Ascending aorta (tissue), 2 donors: ENCODE measurements at regions of chr19 and their contacts with region 1.

Region 1: DNA sequence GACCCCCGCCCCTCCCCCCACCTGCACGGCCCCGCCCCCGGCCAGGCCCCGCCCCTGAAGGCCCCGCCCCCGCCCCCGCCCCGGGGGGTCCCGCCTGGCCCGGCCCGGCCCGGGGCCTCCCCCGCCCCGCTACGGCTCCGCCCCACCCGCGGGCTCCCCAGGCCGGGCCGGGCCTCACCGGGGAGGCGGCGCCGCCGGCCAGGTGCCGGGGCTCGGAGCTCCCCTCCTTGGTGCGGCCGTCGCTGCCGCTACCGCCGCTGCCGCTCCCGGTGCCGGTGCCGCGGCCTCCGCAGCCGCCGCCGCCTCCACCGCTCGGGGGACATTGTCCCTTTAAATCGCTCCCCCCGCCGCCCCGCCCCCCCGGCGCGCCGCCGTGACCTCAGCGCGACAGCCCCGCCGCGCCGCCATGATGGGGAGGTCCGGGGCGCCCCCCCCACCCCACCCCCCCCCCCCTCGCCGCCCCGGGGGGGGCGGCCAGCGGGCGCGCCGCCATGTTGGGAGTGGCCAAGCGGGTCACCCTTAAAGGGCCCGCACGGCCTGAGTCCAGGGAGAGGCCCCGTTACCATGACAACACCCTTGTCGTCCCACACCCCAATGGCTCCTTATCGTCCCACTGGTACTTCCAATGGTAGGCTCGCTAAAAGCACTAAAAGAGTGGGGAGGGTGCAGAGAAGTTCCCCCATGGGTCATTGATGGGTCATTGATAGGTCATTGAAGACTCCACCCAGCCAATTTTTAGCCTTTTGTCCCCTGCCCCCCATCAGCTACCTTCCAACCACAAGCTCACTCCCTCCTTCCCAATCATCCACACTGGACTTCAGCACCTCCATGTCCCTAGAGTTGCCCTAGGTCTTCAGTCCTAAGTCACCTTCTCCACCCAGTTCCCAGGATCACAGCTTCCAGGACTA is at the start of gene WIZ:
- DNase-seq: peak; percentile 43 to 94
- H3K4me3 ChIP-seq: peak within 1 kb of the TSS; percentile 53 to 89
- H3K27ac ChIP-seq: peak within 1 kb of the TSS; percentile 64 to 86
- H3K4me1 ChIP-seq: peaks cover 17 to 36% of the 10 kb centered on the region in 2 donors
- H3K27me3 ChIP-seq: no peaks in the 10 kb centered on the region
- CTCF ChIP-seq: no peak
- total RNA-seq, gene WIZ: 90.4 TPM

Region 2: DNA sequence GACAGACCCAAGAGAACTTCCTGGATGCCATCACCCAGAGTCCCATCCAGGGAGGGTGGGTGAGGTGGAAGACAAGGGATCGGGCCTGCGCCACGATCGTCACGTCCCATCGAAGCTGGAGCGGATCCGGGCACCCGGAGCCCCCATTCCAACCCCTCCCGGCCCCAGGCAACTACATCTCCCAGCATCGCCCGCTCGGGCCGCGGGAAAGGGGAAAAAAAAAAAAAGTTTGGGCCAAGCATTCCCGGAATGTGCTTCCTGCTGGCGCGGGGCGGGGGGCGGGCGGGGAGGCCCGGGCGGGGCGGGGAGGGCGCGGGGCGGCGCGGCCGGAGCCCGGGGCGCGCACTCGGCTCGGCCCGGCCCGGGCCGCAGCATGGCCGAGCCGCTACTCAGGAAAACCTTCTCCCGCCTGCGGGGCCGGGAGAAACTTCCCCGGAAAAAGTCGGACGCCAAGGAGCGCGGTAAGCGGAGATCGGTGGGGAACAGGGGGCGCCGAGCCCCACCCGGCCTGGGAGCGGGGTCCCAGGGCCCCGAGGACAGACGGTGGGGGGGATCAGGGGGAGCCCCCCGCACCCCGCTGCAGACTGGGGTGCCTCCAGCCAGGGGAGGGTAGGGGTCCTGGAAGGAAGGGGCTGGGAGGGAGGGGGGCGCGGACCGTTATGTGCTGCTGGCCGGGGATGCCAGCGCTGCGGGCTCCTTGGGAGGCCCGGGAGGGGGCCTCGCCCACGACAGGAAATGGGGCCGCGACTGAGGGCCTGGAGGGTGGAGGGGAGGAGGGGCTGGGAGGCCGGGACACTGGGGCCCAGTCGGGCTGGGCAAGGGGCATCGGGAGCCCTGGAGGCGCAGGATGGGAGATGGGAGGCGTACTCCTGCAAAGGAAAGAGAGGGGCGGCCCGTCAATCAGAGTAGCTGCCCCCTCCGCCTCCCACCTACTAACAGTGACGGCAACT is 342.5 kb before region 1 on chr19 and contains the start of gene SYDE1:
- intact Hi-C with region 1: loop called (anchors 5 kb)
- DNase-seq: peak in 1 of 2 donors; percentile 78
- H3K4me3 ChIP-seq: peak within 1 kb of the TSS; percentile 84 to 95
- H3K27ac ChIP-seq: peak within 1 kb of the TSS; percentile 92 to 97
- H3K4me1 ChIP-seq: peaks cover 4 to 10% of the 10 kb centered on the region in 2 donors
- H3K27me3 ChIP-seq: no peaks in the 10 kb centered on the region
- CTCF ChIP-seq: no peak
- total RNA-seq, gene SYDE1: 104 TPM

Region 3: DNA sequence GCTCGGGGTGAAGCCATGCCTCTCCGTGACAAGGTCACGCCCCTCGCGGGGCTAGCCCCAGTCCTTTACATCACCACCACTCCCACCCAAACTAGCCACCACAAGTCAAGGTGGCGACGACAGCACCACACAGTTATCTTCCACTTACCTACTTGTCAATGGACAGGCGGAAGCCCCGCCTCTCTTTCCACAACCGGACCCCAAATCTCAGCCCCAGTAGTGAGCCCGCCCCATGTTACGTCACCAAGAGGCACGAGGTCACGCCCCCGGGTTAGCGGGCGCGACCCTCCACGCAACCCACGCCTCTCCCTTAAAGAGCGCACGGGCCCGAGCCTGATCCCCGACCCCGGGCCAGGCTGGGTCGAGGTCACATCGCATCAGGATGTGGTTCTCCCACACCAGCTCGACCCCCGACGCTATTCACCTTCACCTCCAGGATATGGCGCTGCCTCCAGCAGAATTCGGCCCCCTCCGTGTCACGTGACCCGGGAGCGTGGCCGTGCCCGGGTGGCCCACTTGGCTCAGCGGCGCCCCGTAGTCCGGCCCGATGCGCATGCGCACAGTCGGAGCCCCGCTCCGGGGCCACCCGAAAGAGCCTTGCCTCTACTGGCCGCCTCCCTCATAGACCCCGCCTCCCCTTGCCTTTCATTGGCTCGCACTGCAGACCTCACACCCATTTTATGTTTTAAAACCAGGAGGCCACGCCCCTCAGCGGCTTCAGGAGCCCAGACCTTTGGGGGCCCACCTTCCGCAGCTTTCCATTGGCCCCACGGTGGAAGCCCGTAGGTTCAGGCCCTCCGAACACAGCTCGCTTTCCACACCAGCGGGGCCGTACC is 324.4 kb before region 1 on chr19:
- intact Hi-C with region 1: loop called (anchors 5 kb)
- DNase-seq: peak; percentile 95 to 99
- H3K4me3 ChIP-seq: peak overlapping the region; percentile 60 to 84
- H3K27ac ChIP-seq: peak overlapping the region; percentile 81 to 89
- H3K4me1 ChIP-seq: peaks cover 3 to 12% of the 10 kb centered on the region in 2 donors
- H3K27me3 ChIP-seq: no peaks in the 10 kb centered on the region
- CTCF ChIP-seq: no peak

Region 4: DNA sequence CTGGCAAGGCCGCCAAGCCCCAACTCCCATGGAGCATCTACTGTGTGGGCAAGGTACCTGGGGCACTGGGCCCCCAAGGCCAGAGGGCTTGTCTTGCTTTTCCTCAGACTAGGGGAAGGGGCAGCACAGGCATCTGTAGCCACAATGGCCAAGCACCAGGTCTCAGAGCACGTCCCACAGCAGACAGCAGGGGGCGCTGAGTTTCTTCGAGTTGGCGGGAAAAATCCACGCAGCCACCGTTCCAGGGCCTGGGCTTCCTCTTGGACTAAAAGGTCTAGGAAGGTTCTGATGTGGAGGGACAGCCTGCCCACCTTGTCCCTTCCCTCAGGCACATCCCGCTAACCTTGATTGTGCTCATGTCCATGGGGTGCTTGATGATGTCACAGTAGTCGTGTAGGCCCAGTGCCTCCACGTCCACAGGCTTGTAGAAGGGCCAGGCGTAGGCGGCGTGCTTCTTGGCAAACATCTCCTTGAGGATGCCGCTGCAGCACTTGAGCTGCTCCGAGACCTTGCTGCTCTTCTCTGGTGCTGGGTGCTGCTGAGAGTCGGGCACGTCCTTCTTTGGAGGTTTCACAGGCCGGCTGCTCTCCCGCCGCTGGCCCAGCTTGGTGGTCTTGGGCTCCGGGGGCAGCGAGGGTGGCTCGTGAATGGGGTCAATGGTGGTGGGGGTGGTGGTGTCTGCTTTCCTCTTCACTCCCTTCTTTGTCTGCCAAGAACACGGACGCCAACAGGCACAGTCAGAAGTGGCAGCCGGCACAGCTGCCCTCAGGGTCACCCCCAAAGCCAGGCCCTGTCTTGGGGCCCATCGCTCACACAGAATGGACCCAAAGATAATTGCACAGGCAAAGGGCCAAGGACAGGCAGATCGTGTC is 185.6 kb before region 1 on chr19:
- intact Hi-C with region 1: loop called (anchors 5 kb)
- DNase-seq: peak in 1 of 2 donors; percentile 89
- H3K4me3 ChIP-seq: no peak overlapping the region
- H3K27ac ChIP-seq: peak overlapping the region; percentile 69 to 83
- H3K4me1 ChIP-seq: peaks cover 19 to 40% of the 10 kb centered on the region in 2 donors
- H3K27me3 ChIP-seq: no peaks in the 10 kb centered on the region
- CTCF ChIP-seq: peak; percentile 78 to 87 (median 78)

Region 5: DNA sequence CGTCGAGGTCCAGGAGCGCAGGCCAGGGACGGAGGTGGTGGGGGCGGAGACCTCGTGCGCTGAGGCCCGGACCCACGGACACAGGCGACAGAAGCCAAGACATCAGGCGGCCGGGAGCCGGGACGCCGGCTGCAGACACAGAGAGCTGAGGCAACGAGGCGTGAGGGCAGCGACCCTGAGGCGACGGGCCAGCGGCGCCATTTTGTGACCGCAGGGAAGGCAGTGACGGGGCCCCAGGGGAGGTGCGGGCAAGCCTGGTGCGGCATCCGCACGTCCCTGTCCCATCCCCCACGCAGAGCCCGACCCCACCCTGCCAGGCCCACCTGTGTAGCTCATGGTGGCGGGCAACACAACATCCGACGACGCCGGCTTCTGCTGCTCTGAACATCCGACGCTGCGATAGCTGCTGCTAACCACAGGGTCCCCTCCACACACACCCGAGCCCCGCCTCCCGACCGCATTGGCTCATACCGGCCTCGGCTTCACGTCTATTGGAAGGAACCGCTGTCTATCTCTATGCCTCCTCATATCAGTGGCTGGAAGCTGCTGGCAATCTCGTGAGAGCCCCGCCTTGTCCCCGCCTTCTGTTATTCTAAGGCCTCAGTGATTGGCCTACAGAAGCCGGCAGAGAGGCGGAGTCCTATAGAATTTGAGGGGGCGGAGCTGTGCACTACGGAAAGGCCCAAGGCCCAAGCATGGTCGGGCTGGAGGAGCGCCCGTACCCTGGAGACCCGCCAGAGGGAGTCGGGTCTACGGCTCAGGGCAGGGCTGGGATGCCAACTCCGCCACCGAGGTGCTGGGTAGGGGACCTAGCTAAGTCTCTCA is 31.1 kb before region 1 on chr19 and contains the start of gene AKAP8L:
- intact Hi-C with region 1: loop called (anchors 2 kb)
- DNase-seq: peak; percentile 99 to 100
- H3K4me3 ChIP-seq: peak within 1 kb of the TSS; percentile 88 to 97
- H3K27ac ChIP-seq: peak within 1 kb of the TSS; percentile 87 to 88
- H3K4me1 ChIP-seq: peaks cover 5 to 35% of the 10 kb centered on the region in 2 donors
- H3K27me3 ChIP-seq: no peaks in the 10 kb centered on the region
- CTCF ChIP-seq: peak; percentile 25 to 60 (median 45)
- total RNA-seq, gene AKAP8L: 143 TPM

Region 6: DNA sequence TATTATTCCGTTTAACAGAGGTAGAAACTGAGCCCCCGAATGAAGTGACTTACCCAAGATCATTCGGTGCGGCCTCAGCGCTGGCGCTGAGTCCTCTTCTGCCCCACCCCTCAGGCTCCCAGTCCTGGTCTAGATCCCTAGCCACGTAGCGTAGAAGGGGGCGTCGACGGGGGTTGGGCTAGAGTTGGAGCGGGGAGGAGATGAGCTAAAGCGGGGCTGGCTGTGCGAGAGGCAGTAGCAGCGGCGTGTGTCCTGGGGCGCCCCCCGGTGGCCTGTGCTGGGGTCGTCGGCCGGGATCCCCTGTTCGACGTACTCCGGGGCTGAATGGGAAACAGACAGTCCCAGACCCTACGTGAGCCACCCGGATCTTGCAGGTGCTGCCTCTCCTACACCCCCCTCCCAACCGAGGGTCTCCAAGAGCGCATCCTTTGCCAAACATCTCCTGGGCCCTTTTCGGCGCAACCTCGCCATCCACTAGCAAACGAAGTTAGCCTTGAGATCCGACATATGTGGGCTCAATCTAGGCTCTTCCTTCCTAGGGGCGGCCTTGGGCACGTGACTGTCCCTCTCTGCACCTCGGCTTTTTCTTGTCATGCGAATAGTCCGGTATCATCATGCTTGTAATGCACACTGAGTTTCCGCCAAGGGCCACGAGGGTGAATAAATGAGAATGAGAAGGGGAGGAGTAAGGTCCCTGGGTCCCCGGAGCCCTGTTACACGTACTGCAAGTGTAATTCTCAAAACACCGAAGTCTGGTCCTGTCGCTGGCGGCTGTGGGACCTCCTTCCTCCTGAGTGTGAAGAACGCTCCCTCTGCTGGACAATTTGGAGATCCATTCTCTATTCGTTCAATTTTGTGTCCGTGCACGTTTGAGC is 106.1 kb after region 1 on chr19:
- intact Hi-C with region 1: loop called (anchors 5 kb)
- DNase-seq: peak; percentile 73 to 94
- H3K4me3 ChIP-seq: peak overlapping the region; percentile 44 to 59
- H3K27ac ChIP-seq: peak overlapping the region in 1 of 2 donors; percentile 55
- H3K4me1 ChIP-seq: peaks cover 6 to 8% of the 10 kb centered on the region in 2 donors
- H3K27me3 ChIP-seq: no peaks in the 10 kb centered on the region
- CTCF ChIP-seq: peak; percentile 77 to 89 (median 77)